ENCODE measurements at regions of chr11 and their contacts with region 1.

Region 1: GRCh38 chr11:1050581-1051355 is 14.2 kb upstream of the MUC6 start:
- DNase-seq: peak; percentile 83
- H3K4me3 Mint-ChIP-seq: no peak overlapping the region
- H3K27ac Mint-ChIP-seq: no peak overlapping the region
- H3K4me1 Mint-ChIP-seq: peaks cover 4% of the 10 kb centered on the region
- H3K27me3 Mint-ChIP-seq: peaks cover 26% of the 10 kb centered on the region

Region 2: GRCh38 chr11:777288-778255 is 273.2 kb before region 1 on chr11 and contains the start of gene GATD1:
- CTCF ChIA-PET with region 1: no interaction called
- POLR2A ChIA-PET with region 1: no interaction called
- intact Hi-C with region 1: no loop called
- DNase-seq: peak; percentile 95
- H3K4me3 Mint-ChIP-seq: peak within 1 kb of the TSS; percentile 85
- H3K27ac Mint-ChIP-seq: peak within 1 kb of the TSS; percentile 70
- H3K4me1 Mint-ChIP-seq: peaks cover 21% of the 10 kb centered on the region
- H3K27me3 Mint-ChIP-seq: no peaks in the 10 kb centered on the region
- total RNA-seq, gene GATD1: 36.6 to 39.1 TPM

Region 3: DNA sequence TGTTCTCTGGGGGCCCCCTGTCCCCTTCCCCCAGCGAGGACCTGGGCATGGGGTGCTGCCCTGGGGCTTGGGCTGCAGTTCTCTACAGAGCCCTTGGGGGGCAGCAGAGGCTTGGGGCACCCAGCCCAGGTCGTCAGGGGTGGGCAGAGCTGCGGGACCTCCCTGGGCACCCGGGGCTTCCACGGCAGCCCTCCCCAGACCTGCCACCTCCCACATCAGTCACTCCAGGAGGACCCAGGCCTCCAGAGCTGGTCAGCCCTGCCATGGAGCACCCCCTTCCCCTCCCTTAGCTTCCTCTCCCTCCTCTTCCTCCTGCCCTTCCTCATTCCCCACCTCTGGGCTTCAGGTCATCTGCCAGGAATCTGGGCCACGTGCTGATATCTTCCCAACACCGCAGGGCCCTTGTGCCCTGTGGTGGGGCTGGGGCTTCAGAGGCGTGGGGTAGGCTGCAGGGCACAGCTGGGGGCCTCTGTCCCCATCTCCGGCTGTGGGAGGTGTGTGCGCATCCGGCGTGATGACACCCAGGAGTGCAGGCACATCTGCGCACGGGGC is 202.3 kb before region 1 on chr11:
- CTCF ChIA-PET with region 1: interaction called, 33 read pairs
- POLR2A ChIA-PET with region 1: no interaction called
- intact Hi-C with region 1: loop called (anchors 1 kb)
- DNase-seq: peak; percentile 73
- H3K4me3 Mint-ChIP-seq: peak overlapping the region; percentile 20
- H3K27ac Mint-ChIP-seq: no peak overlapping the region
- H3K4me1 Mint-ChIP-seq: peaks cover 9% of the 10 kb centered on the region
- H3K27me3 Mint-ChIP-seq: peaks cover 9% of the 10 kb centered on the region

Measured in activated CD4-positive, alpha-beta memory T cell treated with anti-CD3 and anti-CD28 coated beads for 36 hours (primary cell).